Ovary (tissue), 10 donors: ENCODE measurements at regions of chr20 and their contacts with region 1.

Region 1: DNA sequence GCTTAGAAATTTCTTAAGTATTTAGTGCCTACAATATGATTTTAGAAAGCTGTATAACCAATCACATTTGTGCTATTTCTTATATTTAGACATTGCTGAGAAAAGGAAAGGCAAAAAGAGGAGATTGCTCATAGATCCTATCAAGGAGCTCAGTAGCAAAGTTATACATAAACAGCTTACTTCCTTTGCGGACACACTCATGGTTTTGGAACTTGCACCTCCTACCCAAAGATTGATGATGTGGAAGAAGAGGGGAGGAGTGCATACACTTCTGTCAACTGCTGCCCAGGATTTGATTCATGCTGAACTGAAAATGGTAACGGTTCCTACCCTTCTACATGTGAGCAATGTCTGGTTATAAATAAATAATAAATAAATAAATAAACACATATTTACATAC is 16.7 kb downstream of the RAD21L1 start:
- DNase-seq: no peak
- H3K4me3 ChIP-seq: no peak overlapping the region
- H3K27ac ChIP-seq: no peak overlapping the region
- H3K4me1 ChIP-seq: no peaks in the 10 kb centered on the region
- H3K27me3 ChIP-seq: no peaks in the 10 kb centered on the region
- CTCF ChIP-seq: no peak
- EP300 ChIP-seq: no peak
- POLR2A ChIP-seq: no peak

Region 2: DNA sequence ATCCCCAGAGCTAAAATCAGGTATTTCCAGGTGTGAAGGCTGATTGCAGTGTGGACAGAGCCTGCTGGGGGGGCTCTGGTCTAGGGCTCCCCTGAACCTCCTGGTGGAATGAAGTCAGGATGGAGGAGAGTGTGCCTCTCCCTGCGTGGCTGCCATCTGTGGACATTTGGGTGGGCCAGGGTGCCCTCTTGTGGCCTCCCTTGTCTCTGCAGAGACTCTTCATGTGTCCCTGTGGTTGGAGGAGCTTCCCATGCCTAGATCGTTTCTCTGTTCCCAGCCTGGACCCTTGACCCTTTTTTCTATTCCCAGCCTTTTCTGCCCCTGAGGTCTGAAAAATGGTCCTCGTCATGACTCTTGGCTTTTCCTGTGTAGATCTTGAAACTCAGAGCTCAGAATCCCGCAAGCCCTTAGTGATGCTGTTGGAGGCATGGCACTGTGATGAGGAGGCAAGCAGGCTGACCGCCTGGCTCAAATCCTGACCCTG is 134.1 kb before region 1 on chr20:
- intact Hi-C with region 1: no loop called
- DNase-seq: peak in 3 of 5 donors; percentile 26 to 51 (median 29)
- H3K4me3 ChIP-seq: no peak overlapping the region
- H3K27ac ChIP-seq: no peak overlapping the region
- H3K4me1 ChIP-seq: no peaks in the 10 kb centered on the region
- H3K27me3 ChIP-seq: no peaks in the 10 kb centered on the region
- CTCF ChIP-seq: no peak
- EP300 ChIP-seq: no peak
- POLR2A ChIP-seq: no peak

Region 3: DNA sequence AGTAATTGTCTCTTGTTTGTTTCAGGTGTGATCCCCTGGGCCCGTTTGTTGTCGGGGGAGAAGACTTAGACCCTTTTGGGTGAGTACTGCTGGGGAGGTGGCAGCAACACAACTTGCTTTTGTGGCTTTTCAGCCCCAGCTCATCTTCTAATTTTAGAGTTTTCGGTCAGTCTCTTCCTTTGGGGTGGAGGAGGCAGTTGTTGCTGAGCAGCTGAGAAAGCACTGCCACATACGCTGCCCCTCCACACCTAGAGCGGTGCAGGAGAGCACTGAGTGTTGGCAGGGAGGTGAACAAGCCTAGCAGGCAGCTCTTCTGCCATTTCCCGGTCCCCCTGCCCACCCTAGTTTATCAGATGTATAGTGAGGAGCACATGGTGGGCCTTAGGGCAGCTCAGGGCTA is 79.4 kb before region 1 on chr20:
- intact Hi-C with region 1: loop called in 1 of 4 experiments (anchors 5 kb)
- DNase-seq: no peak
- H3K4me3 ChIP-seq: no peak overlapping the region
- H3K27ac ChIP-seq: no peak overlapping the region
- H3K4me1 ChIP-seq: no peaks in the 10 kb centered on the region
- H3K27me3 ChIP-seq: no peaks in the 10 kb centered on the region
- CTCF ChIP-seq: no peak
- EP300 ChIP-seq: no peak
- POLR2A ChIP-seq: no peak

Region 4: DNA sequence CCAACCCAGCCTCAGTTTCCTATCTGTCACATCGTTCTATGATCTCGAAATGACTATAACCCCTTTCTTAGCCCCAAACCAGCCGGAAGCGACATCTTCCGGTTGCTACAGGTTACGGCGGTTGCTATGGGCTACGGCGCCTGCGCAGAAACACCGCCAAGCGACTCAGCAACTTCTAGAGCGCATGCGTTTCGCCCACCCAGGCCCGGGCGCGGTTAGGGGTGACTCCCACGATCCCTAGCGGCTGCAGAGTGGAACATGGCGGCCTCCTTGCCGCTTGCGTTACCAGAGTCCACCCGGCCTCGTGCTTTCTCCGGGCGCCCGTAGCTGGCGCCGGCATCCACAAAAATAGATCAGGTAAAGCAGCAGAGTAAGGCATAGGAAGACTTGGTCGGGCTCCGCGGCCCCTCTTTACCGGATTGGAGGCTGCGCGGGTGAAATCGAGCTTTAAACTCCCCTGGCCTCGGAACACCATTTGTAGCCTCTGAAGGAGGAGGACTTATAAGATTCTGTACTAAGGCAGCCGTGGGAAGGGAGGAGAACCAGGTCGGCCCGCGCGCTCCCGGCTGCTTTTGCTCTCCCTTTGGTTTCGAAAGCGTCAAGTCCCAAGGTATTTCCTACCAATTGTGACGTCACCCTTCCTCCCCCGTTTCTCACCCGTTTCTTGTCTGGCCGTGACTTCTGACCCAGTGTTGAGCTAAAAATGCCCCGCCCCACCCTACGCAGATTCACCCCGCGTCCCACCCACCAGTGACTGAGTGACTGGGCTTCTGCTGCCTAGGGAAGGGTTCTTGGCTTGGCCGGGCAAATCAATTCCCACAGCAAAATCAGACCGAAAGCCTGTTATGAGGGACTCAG is 82.9 kb after region 1 on chr20:
- intact Hi-C with region 1: no loop called
- DNase-seq: peak; percentile 98 to 99 (median 99)
- H3K4me3 ChIP-seq: peak overlapping the region; percentile 76
- H3K27ac ChIP-seq: peak overlapping the region; percentile 92 to 97
- H3K4me1 ChIP-seq: peaks cover 26% of the 10 kb centered on the region
- H3K27me3 ChIP-seq: no peaks in the 10 kb centered on the region
- CTCF ChIP-seq: peak in 2 of 3 donors; percentile 44 to 72
- EP300 ChIP-seq: peak; percentile 27
- POLR2A ChIP-seq: peak; percentile 95